ENCODE measurements at regions of chr16 and their contacts with region 1.

Region 1: DNA sequence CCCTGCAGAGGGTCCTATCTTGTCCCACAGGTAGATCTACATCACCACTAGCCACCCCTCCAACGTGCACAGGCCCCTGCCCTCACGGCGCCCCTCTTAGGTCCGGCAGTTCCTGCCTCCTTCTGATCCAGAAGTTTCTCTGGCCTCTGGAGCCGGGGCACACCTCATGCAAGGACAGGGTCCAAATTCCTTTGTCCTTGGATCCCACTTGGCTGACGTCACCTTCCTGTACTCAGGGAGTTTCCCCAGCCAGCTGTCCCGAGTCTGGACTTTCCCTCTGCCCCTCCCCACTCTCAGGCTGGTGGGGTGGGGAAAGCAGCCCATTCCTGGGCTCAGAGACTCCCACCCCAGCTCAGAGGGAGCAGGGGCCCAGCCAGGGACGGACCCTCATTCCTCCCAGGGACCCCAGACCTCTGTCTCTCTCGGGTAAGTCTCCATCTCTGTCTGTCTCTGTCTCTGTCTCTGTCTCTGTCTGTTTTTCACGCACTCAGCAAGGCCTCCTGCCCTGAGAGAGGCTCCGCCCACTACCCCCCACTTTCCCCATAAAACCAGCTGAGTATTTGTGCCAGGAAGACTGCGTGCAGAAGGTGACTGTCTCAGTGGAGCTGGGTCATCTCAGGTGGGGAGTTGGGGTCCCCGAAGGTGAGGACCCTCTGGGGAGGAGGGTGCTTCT is at the start of gene IL32:
- DNase-seq: peak; percentile 87
- ATAC-seq: peak; percentile 77
- H3K4me3 ChIP-seq: peak within 1 kb of the TSS; percentile 57 to 90 (median 71)
- H3K27ac ChIP-seq: peak within 1 kb of the TSS; percentile 82
- H3K4me1 ChIP-seq: peaks cover 37% of the 10 kb centered on the region
- H3K27me3 ChIP-seq: no peaks in the 10 kb centered on the region; a peak in 2 of 5 replicates
- CTCF ChIP-seq: 0 out of 2 replicates have a peak, but pooled peaks have one; percentile 8
- EP300 ChIP-seq: peak in 1 of 2 experiments; percentile 59; a peak in 2 of 4 replicates
- POLR2A ChIP-seq: peak; percentile 72 to 75
- RAD21 ChIP-seq: no peak
- total RNA-seq, gene IL32: 115 and 127 TPM in 2 replicates

Region 2: GRCh38 chr16:3099732-3100499 is 34.7 kb after region 1 on chr16:
- CTCF ChIA-PET with region 1: interaction called, 7 read pairs
- POLR2A ChIA-PET with region 1: interaction called, 13 read pairs
- in situ Hi-C with region 1: no loop called
- intact Hi-C with region 1: no loop called
- DNase-seq: peak; percentile 81
- ATAC-seq: peak; percentile 75
- H3K4me3 ChIP-seq: peak overlapping the region in 2 of 3 experiments; percentile 5 to 62; a peak in 2 of 6 replicates
- H3K27ac ChIP-seq: no peak overlapping the region
- H3K4me1 ChIP-seq: peaks cover 59% of the 10 kb centered on the region
- H3K27me3 ChIP-seq: peaks cover 0 to 13% of the 10 kb centered on the region in 2 experiments; a peak in 2 of 5 replicates
- CTCF ChIP-seq: no peak
- EP300 ChIP-seq: no peak
- POLR2A ChIP-seq: peak in 1 of 2 experiments; percentile 58; a peak in 1 of 4 replicates
- RAD21 ChIP-seq: no peak

Measured in HepG2 (cell line).